ENCODE measurements at regions of chr5 and their contacts with region 1.

Region 1: GRCh38 chr5:74766849-74767578 is at the starts of genes GFM2 and NSA2:
- DNase-seq: peak; percentile 91 to 94 (median 93)
- ATAC-seq: peak; percentile 98 to 99 (median 99)
- H3K4me3 ChIP-seq: peak within 1 kb of the TSS; percentile 92 to 99 (median 97)
- H3K27ac ChIP-seq: peak within 1 kb of the TSS; percentile 59 to 79 (median 67)
- H3K4me1 ChIP-seq: peaks cover 0 to 23% (median 10%) of the 10 kb centered on the region in 4 donors
- H3K27me3 ChIP-seq: no peaks in the 10 kb centered on the region
- CTCF ChIP-seq: no peak
- POLR2A ChIP-seq: no peak
- total RNA-seq, gene GFM2: 16.5 to 35.0 (median 29.7) TPM
- total RNA-seq, gene NSA2: 19.0 to 66.3 (median 26.1) TPM

Region 2: GRCh38 chr5:74903165-74903787 is 136.3 kb after region 1 on chr5:
- intact Hi-C with region 1: loop called in 1 of 2 experiments (anchors 10 kb)
- DNase-seq: peak; percentile 59 to 81 (median 75)
- ATAC-seq: peak; percentile 100
- H3K4me3 ChIP-seq: no peak overlapping the region
- H3K27ac ChIP-seq: no peak overlapping the region
- H3K4me1 ChIP-seq: no peaks in the 10 kb centered on the region
- H3K27me3 ChIP-seq: no peaks in the 10 kb centered on the region
- CTCF ChIP-seq: peak; percentile 68 to 81 (median 78)
- POLR2A ChIP-seq: no peak

Region 3: DNA sequence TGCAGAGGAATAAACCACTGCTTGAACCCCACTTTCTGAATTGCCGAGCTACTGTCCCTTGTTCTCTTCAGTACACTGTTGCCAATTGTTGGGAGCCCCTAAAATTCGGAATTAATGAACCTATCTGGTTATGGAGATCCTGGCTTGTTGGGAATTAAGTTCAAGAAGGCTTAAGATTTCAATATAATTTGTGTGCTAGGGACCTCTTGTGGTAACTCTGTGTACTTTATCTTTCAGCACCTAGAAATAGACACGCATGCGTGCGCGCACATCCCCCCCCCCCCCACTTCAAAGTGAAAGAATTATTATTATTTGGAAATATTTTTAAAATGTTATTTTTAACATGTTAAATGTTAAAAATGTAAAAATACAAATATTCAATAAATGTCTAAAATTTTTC is 152.5 kb after region 1 on chr5:
- intact Hi-C with region 1: loop called in 1 of 2 experiments (anchors 10 kb)
- DNase-seq: no peak
- ATAC-seq: peak; percentile 53 to 70 (median 58)
- H3K4me3 ChIP-seq: no peak overlapping the region
- H3K27ac ChIP-seq: peak overlapping the region in 2 of 3 donors; percentile 84 to 87
- H3K4me1 ChIP-seq: peaks cover 0 to 37% (median 11%) of the 10 kb centered on the region in 4 donors
- H3K27me3 ChIP-seq: no peaks in the 10 kb centered on the region
- CTCF ChIP-seq: peak; percentile 47 to 67 (median 56)
- POLR2A ChIP-seq: no peak